Activated CD4-positive, alpha-beta memory T cell treated with anti-CD3 and anti-CD28 coated beads for 36 hours (primary cell): ENCODE measurements at regions of chr14 and their contacts with region 1.

Region 1: DNA sequence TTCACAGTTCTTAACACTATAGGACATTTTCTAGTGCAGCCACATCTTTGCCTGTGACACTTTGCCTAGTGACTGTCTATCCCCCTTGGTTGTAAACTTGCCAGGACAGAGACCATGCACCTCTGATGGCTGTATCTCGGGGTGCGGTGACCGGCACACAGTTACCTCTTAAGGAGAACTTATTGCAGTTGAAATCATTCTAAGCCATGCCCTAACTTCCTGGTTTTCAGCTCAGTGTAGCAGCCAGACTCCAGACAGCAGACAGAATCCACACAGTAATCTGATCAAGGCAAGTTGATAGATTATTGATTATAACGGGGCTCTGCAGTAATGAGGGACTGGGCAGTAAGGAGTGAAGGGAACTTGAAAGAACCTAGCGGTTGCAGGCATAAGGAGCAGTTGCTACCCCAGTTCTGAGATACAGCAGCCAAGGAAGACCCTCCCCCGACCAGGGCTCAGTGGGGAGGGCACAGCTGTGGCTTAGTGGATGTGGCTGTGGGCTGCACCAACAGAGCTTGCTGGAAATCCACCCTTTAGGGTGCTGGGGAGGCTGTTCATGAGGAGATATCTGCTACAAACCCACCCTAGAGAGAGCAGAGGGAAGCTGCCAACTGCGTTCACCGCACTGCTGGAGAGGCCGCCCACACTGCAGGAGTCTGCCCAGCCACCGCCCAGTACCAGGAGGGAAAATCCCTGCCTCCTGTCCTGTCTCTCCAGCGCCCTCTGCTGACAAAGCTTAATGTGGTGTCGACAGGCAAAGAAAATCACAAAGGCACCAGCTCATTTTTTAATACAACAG is 58.2 kb upstream of the BEGAIN start:
- DNase-seq: peak; percentile 92
- H3K4me3 Mint-ChIP-seq: no peak overlapping the region
- H3K27ac Mint-ChIP-seq: no peak overlapping the region
- H3K4me1 Mint-ChIP-seq: peaks cover 41% of the 10 kb centered on the region
- H3K27me3 Mint-ChIP-seq: no peaks in the 10 kb centered on the region

Region 2: GRCh38 chr14:99541677-99542470 is 1103.5 kb before region 1 on chr14:
- CTCF ChIA-PET with region 1: no interaction called
- POLR2A ChIA-PET with region 1: no interaction called
- intact Hi-C with region 1: no loop called
- DNase-seq: peak; percentile 18
- H3K4me3 Mint-ChIP-seq: no peak overlapping the region
- H3K27ac Mint-ChIP-seq: no peak overlapping the region
- H3K4me1 Mint-ChIP-seq: peaks cover 6% of the 10 kb centered on the region
- H3K27me3 Mint-ChIP-seq: no peaks in the 10 kb centered on the region

Region 3: GRCh38 chr14:100383727-100384158 is 261.6 kb before region 1 on chr14:
- CTCF ChIA-PET with region 1: interaction called, 232 read pairs
- POLR2A ChIA-PET with region 1: interaction called, 3 read pairs
- intact Hi-C with region 1: loop called (anchors 1 kb)
- DNase-seq: peak; percentile 73
- H3K4me3 Mint-ChIP-seq: no peak overlapping the region
- H3K27ac Mint-ChIP-seq: no peak overlapping the region
- H3K4me1 Mint-ChIP-seq: peaks cover 8% of the 10 kb centered on the region
- H3K27me3 Mint-ChIP-seq: no peaks in the 10 kb centered on the region

Region 4: DNA sequence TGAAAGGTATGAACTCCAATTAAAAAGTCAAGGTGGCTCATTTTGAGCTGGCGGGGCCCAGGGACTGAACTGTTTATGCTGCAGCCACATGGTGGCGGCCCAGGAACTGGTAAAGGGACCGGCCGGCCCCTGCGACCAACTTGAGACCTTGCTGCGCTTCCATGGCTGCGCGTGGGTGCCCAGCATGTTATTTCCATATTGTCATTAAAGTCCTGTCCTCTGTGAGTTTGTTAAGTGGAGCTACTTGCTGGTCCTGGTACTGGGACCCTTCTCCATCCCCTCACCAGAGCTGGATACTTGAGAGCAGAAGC is 120.5 kb before region 1 on chr14:
- CTCF ChIA-PET with region 1: interaction called, 60 read pairs
- POLR2A ChIA-PET with region 1: no interaction called
- intact Hi-C with region 1: loop called (anchors 2 kb)
- DNase-seq: peak; percentile 40
- H3K4me3 Mint-ChIP-seq: no peak overlapping the region
- H3K27ac Mint-ChIP-seq: no peak overlapping the region
- H3K4me1 Mint-ChIP-seq: no peaks in the 10 kb centered on the region
- H3K27me3 Mint-ChIP-seq: no peaks in the 10 kb centered on the region

Region 5: DNA sequence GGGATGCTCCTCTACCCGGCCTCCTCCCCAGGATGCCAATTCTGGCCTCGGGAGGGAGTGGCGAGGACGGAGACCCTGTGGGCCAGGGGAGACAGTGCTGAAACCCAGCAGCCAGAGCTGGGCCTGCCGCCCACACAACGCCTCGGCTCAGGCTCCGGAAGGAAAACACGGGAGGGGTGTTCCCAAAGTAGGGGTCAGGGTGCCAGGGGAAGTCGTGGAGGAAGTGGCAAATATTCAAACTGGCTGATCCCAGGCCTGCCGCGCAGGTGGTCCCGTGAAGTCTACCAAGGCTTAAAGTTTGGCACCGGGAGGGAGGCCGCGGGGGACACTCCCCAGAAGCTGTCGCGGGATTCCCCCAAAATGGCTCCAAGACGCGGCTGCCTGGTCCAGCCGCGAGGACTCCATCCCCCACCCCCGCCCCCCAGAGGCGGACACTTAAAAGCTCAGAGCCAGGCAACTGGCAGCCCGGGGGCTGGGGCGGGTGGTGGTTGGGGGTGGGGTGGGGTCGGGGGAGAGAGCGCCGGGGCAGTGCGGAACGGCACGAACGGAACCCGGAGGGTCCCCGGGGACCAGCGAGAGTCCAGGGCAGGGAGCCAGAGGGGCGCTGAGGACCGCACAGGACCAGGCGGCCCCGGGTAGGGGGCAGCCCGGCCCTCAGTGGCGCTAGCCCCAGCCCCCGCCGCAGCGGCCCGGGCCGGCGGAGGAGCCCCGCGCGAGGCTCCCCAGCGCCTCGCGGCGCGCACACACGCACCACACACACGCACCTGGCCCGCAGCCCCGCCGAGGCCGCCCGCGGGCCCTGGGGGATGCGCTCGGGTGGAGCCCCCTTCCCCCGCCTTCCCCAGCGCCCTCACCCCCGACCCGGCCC is 78.1 kb before region 1 on chr14:
- CTCF ChIA-PET with region 1: interaction called, 7 read pairs
- POLR2A ChIA-PET with region 1: no interaction called
- intact Hi-C with region 1: loop called (anchors 5 kb)
- DNase-seq: peak; percentile 13
- H3K4me3 Mint-ChIP-seq: peak overlapping the region; percentile 48
- H3K27ac Mint-ChIP-seq: no peak overlapping the region
- H3K4me1 Mint-ChIP-seq: peaks cover 5% of the 10 kb centered on the region
- H3K27me3 Mint-ChIP-seq: peaks cover 30% of the 10 kb centered on the region

Region 6: DNA sequence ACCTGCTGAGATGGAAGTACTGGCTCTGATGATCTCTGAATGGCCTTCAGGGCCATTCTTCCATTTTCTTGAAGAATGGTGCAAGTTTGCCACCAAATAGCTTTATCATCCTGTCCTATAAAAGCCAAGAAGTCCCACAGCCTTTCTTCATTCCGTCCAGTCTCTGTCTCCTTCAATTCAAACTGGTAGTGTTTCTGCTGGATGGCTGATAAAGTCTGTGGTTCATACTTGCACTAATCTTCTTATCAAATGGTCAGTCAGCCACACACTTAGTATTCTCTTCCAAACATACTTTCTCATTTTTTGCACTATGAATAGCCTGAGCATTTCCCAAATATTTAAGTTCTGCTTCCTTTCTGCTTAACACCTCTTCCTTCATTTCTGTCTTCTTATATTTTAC is 18.8 kb before region 1 on chr14:
- CTCF ChIA-PET with region 1: interaction called, 12 read pairs
- POLR2A ChIA-PET with region 1: no interaction called
- intact Hi-C with region 1: no loop called
- DNase-seq: no peak
- H3K4me3 Mint-ChIP-seq: no peak overlapping the region
- H3K27ac Mint-ChIP-seq: no peak overlapping the region
- H3K4me1 Mint-ChIP-seq: no peaks in the 10 kb centered on the region
- H3K27me3 Mint-ChIP-seq: peaks cover 9% of the 10 kb centered on the region

Region 7: GRCh38 chr14:100790502-100791347 is 145.3 kb after region 1 on chr14:
- CTCF ChIA-PET with region 1: no interaction called
- POLR2A ChIA-PET with region 1: no interaction called
- intact Hi-C with region 1: no loop called
- DNase-seq: no peak
- H3K4me3 Mint-ChIP-seq: no peak overlapping the region
- H3K27ac Mint-ChIP-seq: no peak overlapping the region
- H3K4me1 Mint-ChIP-seq: no peaks in the 10 kb centered on the region
- H3K27me3 Mint-ChIP-seq: peaks cover 7% of the 10 kb centered on the region

Region 8: GRCh38 chr14:101628471-101628966 is 983.1 kb after region 1 on chr14:
- CTCF ChIA-PET with region 1: no interaction called
- POLR2A ChIA-PET with region 1: no interaction called
- intact Hi-C with region 1: loop called (anchors 10 kb)
- DNase-seq: peak; percentile 81
- H3K4me3 Mint-ChIP-seq: no peak overlapping the region
- H3K27ac Mint-ChIP-seq: no peak overlapping the region
- H3K4me1 Mint-ChIP-seq: peaks cover 3% of the 10 kb centered on the region
- H3K27me3 Mint-ChIP-seq: peaks cover 1% of the 10 kb centered on the region